ENCODE measurements at regions of chr16 and their contacts with region 1.

Region 1: GRCh38 chr16:3305109-3306068 is at the starts of genes TIGD7 and ZNF75A:
- DNase-seq: peak; percentile 89 to 95 (median 91)
- ATAC-seq: peak; percentile 99 to 100 (median 99)
- H3K4me3 ChIP-seq: peak within 1 kb of the TSS; percentile 45 to 99 (median 93)
- H3K27ac ChIP-seq: peak within 1 kb of the TSS; percentile 76 to 91 (median 78)
- H3K4me1 ChIP-seq: peaks cover 0 to 16% (median 2%) of the 10 kb centered on the region in 4 donors
- H3K27me3 ChIP-seq: no peaks in the 10 kb centered on the region
- CTCF ChIP-seq: peak in 3 of 4 donors; percentile 12 to 28 (median 16)
- POLR2A ChIP-seq: peak; percentile 86
- total RNA-seq, gene TIGD7: 0.56 to 1.9 (median 1.7) TPM
- total RNA-seq, gene ZNF75A: 7.5 to 11.5 (median 10.5) TPM

Region 2: DNA sequence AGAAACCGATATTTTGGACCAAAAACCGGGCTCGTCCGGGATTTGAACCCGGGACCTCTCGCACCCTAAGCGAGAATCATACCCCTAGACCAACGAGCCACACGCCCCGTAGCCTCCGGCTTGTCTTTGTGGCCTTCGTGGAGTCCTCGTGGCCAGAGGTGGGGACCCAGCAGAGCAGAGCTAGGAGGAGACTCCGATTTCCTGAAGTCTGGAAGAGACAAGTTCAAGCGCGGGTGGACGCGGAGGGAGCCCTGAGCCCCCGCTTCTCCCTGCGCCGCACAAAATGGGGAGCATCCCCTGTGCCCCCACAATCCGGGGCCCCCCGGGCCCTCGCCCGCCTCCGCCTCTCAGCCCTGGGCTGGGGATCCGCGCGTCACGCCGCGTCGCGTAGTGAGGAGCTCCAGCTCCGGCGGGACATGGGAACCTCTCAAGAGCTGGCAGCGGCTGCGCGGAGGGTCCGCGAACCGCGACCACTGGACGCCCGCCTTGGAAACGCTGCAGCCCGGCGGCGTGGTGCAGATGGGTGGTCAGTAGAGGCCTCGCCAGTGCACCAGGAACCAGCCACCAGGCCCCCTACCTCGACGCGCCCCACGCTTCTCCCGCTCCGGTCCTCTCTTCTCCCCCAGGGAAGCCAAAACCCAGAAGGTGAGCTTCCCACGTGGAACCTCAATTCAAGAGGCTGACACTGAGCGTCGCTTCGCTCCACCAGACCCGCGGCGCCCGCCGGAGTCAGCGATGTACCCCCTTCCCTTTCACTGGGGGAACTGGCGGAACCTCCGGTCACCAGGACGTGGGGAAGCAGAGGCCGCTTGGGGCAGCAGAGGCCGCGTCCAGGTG is 122.6 kb before region 1 on chr16:
- intact Hi-C with region 1: no loop called
- DNase-seq: peak in 1 of 3 donors; percentile 51
- ATAC-seq: peak; percentile 48 to 80 (median 62)
- H3K4me3 ChIP-seq: peak overlapping the region in 2 of 3 donors; percentile 14 to 20
- H3K27ac ChIP-seq: no peak overlapping the region
- H3K4me1 ChIP-seq: peaks cover 0 to 7% (median under 1%) of the 10 kb centered on the region in 4 donors
- H3K27me3 ChIP-seq: peaks cover 0 to 26% of the 10 kb centered on the region in 2 donors
- CTCF ChIP-seq: peak; percentile 9 to 35 (median 28)
- POLR2A ChIP-seq: no peak

Region 3: DNA sequence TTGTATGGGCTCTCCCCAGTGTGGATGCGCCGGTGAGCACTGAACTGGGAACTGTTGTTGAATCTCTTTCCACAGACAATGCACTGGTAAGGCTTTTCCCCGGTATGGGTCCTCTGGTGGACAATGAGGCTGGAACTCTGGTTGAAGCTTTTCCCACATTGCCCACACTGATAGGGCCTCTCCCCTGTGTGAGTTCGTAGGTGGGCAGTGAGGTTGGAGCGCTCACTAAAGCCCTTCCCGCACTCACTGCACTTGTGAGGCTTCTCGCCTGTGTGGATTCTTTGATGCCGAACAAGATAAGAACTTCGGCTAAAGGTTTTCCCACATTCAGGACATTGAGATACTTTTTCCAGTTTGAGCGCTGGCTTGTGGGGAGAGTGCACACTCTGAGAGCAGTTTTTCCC is 77.7 kb after region 1 on chr16:
- intact Hi-C with region 1: loop called in 1 of 2 experiments (anchors 10 kb)
- DNase-seq: no peak
- ATAC-seq: no peak
- H3K4me3 ChIP-seq: no peak overlapping the region
- H3K27ac ChIP-seq: no peak overlapping the region
- H3K4me1 ChIP-seq: no peaks in the 10 kb centered on the region
- H3K27me3 ChIP-seq: no peaks in the 10 kb centered on the region
- CTCF ChIP-seq: no peak
- POLR2A ChIP-seq: no peak

Measured in right lobe of liver (tissue), 6 donors.